ENCODE measurements at regions of chr14 and their contacts with region 1.

Region 1: DNA sequence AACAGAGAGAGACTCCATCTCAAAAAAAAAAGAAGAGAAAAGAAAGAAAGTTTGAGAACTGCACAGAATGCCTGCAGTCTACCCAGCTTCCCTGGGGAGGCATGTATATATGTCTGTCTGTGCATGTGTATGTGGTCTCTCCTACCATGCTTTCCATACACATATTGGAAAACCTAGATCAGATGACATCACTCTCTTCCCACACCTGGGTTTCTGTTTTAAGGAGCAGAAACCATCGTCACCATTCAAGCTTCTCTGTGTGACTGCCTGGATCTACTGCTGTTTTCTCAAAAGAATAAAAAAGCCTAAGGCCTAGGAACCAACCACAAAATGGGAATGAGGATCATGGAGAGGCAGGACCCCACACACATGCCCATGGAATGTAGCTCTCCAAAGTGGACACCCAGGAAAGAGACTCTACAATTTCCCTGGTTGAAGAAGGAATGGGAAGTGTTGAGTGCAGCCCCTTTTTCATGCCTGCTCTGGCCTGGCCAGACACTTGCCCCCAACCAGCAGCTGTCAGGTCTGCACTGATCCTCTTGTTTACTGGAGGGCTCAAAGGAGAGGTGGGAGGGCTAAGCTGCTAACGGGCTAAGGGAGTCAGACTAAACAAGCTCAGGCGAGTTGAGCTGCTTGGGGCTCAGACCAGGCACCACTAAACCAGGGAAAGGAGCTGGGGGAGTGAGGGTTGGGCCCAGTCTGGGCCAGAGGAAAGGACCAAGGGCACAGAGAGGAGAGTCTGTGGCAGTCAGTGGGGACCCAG is 7.7 kb upstream of the PCK2 start:
- DNase-seq: no peak
- H3K4me3 Mint-ChIP-seq: no peak overlapping the region
- H3K27ac Mint-ChIP-seq: no peak overlapping the region
- H3K4me1 Mint-ChIP-seq: peaks cover 7% of the 10 kb centered on the region
- H3K27me3 Mint-ChIP-seq: no peaks in the 10 kb centered on the region

Region 2: DNA sequence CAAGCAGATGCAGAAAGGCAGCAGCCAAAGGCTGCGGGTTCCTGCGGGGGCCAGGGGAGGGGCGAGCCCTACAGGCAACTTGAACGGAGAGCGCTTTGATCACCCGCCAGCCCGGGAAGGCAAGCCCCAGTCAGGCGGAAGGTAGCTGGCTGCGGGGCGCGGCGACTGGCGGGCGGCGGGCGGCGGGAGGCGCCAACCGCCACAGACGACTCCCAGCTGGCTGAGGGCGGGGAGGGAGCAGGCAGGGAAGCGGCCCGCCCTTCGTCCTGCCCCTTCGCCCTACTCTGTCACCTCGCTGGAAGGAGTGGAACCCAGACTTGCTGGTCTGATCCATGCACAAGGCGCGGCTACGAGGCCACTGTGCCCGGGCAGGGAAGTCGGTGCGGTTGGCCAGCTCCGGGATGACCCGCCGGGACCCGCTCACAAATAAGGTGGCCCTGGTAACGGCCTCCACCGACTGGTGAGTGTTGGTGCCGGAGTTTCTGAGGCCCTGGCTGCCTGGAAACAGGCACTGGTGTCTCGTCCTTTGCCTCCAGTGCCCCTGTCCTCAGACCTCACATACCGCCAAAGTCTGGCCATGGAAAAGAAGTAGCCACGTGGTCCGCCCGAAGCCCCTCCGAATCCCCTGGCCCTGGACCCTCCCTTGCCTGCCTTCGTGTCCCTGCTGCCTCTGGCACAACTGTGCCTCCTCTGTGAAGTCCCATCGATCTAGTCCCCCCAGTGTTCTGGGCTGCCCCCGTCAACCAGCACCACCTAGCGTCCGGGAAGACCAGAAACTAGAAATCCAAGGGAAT is 50.0 kb before region 1 on chr14:
- CTCF ChIA-PET with region 1: interaction called, 3 read pairs
- intact Hi-C with region 1: loop called (anchors 1 kb)
- DNase-seq: peak; percentile 78
- H3K4me3 Mint-ChIP-seq: peak overlapping the region; percentile 91
- H3K27ac Mint-ChIP-seq: peak overlapping the region; percentile 83
- H3K4me1 Mint-ChIP-seq: peaks cover 5% of the 10 kb centered on the region
- H3K27me3 Mint-ChIP-seq: no peaks in the 10 kb centered on the region

Region 3: DNA sequence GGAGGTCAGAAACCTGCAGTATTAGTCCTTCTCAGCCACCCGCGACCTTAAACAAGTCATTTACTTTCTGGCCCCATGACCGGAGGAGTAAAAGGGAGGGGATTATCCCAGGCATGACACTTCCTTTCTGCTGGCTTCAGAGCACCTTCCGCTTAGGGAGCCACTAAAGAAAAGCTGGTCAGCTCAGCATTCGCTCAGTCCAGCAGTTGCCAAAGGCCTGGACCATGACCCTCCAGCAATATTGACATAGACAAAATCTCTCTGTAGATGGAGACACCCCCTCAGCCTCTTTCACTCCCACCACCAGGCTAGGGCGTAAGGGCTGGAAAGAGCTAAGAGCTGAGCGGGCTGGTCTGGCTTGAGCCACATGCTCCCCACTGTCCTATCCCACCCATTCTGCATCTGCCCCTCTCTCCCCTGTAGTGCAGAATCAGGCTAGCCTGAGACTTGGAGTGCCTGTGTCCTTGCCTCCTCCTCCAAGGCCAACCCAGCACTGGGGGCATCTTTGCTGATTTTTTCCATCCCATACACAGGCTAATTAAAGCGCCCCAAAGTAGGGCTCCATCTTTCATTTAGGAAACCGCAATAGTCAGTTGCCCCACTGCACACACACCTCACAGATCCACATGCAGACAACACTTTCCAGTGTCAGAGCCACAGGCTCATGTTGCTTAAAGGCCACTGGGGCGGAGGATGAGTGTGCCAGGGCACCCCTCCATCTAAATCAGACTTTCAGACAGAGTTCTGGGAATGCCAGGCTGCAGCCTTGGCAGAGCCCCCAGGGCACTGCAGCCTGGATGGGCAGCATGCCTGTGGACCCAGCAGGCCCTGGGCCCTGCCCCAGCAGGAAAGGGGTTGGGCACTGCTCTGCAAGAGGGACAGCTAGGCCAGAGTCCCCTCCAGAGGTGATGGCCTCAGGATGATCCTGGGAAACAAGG is 19.0 kb before region 1 on chr14:
- CTCF ChIA-PET with region 1: interaction called, 386 read pairs
- intact Hi-C with region 1: no loop called
- DNase-seq: no peak
- H3K4me3 Mint-ChIP-seq: no peak overlapping the region
- H3K27ac Mint-ChIP-seq: no peak overlapping the region
- H3K4me1 Mint-ChIP-seq: peaks cover 5% of the 10 kb centered on the region
- H3K27me3 Mint-ChIP-seq: no peaks in the 10 kb centered on the region

Region 4: GRCh38 chr14:24075485-24076301 is 10.7 kb before region 1 on chr14:
- CTCF ChIA-PET with region 1: interaction called, 76 read pairs
- intact Hi-C with region 1: no loop called
- DNase-seq: no peak
- H3K4me3 Mint-ChIP-seq: no peak overlapping the region
- H3K27ac Mint-ChIP-seq: no peak overlapping the region
- H3K4me1 Mint-ChIP-seq: peaks cover 12% of the 10 kb centered on the region
- H3K27me3 Mint-ChIP-seq: no peaks in the 10 kb centered on the region